ENCODE measurements at regions of chr11 and their contacts with region 1.

Region 1: DNA sequence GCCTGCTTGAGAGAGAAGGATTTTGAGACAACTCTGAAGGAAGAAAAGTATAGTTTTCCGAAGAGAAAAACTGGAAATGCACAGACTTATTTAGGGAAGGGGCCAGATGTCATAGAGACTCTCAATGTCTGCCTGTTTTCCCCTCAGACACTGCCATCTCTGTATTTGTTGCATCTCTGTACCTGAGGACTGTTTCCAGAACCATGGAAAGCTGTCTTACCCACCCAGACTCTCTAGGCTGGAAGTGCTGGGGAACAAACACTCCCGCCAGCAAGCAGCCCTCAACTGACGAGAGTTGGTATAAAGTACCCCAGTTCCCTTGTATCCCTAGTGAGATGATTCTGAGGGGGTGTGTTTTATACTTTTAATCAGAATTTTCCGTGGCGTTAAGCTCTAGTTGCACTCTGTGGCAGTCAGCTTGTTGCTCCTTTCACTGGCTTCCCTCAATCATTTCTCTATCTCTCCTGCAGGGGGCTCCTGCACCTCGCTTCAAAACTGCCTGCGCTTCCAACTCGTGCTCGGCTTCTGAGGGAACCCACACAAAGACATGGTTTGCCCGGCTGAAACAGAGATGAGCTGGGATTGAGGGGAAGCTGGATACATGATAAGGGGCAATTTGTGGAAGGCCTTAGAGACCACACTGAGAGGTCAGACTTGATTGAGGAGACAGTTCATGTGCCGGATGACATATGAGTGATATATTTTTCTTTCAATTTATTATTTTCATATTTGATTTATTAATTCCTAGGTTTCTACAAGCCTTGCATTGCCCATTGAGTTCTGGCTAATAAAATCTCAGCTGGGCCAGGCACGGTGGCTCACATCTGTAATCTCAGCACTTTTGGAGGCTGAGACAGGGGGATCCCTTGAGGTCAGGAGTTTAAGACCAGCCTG is 36.9 kb upstream of the CLPB start:
- DNase-seq: peak in 4 of 5 donors; percentile 54 to 73 (median 60)
- ATAC-seq: peak; percentile 69 to 87 (median 80)
- H3K4me3 ChIP-seq: no peak overlapping the region
- H3K27ac ChIP-seq: no peak overlapping the region
- H3K4me1 ChIP-seq: peaks cover 0 to 12% (median 0%) of the 10 kb centered on the region in 12 donors
- H3K27me3 ChIP-seq: peaks cover 0 to 26% (median 0%) of the 10 kb centered on the region in 9 donors
- CTCF ChIP-seq: peak; percentile 69 to 86 (median 77)
- POLR2A ChIP-seq: no peak

Region 2: GRCh38 chr11:72391638-72392423 is 79.4 kb before region 1 on chr11:
- intact Hi-C with region 1: no loop called
- DNase-seq: no peak
- ATAC-seq: no peak
- H3K4me3 ChIP-seq: no peak overlapping the region
- H3K27ac ChIP-seq: no peak overlapping the region
- H3K4me1 ChIP-seq: peaks cover 0 to 12% (median 4%) of the 10 kb centered on the region in 12 donors
- H3K27me3 ChIP-seq: no peaks in the 10 kb centered on the region
- CTCF ChIP-seq: no peak
- POLR2A ChIP-seq: no peak

Region 3: DNA sequence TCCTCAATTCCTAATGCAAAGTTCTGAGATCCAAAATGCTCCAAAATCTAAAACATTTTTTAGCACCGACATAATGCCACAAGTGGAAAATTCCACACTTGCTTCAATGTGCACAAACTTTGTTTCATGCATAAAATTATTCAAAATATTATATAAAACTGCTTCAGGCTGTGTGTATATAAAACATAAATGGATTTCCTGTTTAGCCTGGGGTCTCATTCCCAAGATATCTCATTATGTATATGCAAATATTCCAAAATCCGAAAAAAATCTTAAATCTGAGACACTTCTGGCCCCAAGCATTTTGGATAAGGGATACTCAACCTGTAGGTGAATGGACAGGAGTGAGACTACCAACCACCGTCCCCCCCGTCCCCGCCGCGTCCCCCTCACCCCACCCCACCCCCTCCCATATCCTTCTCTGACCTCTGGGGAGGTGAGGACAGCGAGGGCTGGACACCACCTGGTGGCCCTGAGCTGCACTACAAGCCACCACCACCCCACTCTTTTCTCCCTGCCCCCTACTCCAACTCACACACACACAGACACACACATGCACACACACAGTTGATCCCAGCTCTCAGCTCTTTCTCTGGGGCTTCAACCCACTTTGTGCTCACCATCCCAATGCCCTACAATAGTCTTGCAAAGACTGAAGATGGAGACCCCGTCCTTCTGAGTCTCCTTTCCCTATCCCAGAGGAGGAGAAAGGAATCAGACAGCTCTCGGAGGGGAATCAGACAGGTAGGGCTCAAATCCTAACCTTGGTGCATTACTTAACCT is 102.0 kb after region 1 on chr11:
- intact Hi-C with region 1: loop called in 3 of 10 experiments (anchors 1 to 5 kb)
- DNase-seq: no peak
- ATAC-seq: peak; percentile 44 to 77 (median 64)
- H3K4me3 ChIP-seq: no peak overlapping the region
- H3K27ac ChIP-seq: no peak overlapping the region
- H3K4me1 ChIP-seq: peaks cover 0 to 16% (median 0%) of the 10 kb centered on the region in 12 donors
- H3K27me3 ChIP-seq: no peaks in the 10 kb centered on the region
- CTCF ChIP-seq: peak; percentile 27 to 66 (median 54)
- POLR2A ChIP-seq: no peak

Region 4: GRCh38 chr11:72642884-72643511 is 171.7 kb after region 1 on chr11:
- intact Hi-C with region 1: loop called in 7 of 10 experiments (anchors 2 to 10 kb)
- DNase-seq: peak; percentile 41 to 84 (median 62)
- ATAC-seq: peak; percentile 33 to 82 (median 72)
- H3K4me3 ChIP-seq: peak overlapping the region; percentile 54 to 88 (median 72)
- H3K27ac ChIP-seq: peak overlapping the region in 9 of 12 donors; percentile 8 to 82 (median 43)
- H3K4me1 ChIP-seq: peaks cover 2 to 43% (median 20%) of the 10 kb centered on the region in 12 donors
- H3K27me3 ChIP-seq: peaks cover 0 to 29% (median 0%) of the 10 kb centered on the region in 9 donors
- CTCF ChIP-seq: peak; percentile 95 to 100 (median 98)
- POLR2A ChIP-seq: no peak

Region 5: GRCh38 chr11:72676861-72677341 is 205.6 kb after region 1 on chr11:
- intact Hi-C with region 1: loop called in 8 of 10 experiments (anchors 2 to 10 kb)
- DNase-seq: peak; percentile 51 to 84 (median 66)
- ATAC-seq: peak in 3 of 4 donors; percentile 64 to 72 (median 65)
- H3K4me3 ChIP-seq: no peak overlapping the region
- H3K27ac ChIP-seq: no peak overlapping the region
- H3K4me1 ChIP-seq: peaks cover 0 to 24% (median 1%) of the 10 kb centered on the region in 12 donors
- H3K27me3 ChIP-seq: peaks cover 13 to 69% (median 46%) of the 10 kb centered on the region in 9 donors
- CTCF ChIP-seq: no peak
- POLR2A ChIP-seq: no peak

Region 6: DNA sequence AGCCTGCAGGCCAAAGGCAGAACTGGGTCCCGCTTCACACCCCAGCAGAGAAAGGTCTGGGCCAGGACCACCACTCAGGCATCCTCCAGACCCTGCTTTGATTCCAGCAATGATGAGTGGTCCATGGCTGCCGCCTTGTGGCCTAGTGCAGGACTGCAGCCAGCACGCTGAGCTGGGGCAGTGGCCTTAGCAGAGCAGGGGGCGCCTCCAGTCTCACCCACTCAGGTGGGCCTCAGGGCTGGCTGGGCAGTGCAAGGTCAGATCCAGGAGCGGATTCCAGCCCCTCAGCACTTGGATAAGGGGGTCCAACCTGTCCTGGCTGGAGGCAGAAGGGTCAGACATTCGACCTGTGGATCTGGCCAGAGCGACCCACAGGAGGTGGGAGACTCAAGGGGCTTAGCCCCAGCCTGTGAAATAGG is 212.5 kb after region 1 on chr11:
- intact Hi-C with region 1: loop called in 8 of 10 experiments (anchors 2 to 10 kb)
- DNase-seq: peak; percentile 53 to 83 (median 65)
- ATAC-seq: peak; percentile 43 to 60 (median 46)
- H3K4me3 ChIP-seq: no peak overlapping the region
- H3K27ac ChIP-seq: peak overlapping the region in 6 of 12 donors; percentile 38 to 72 (median 66)
- H3K4me1 ChIP-seq: peaks cover 0 to 61% (median 31%) of the 10 kb centered on the region in 12 donors
- H3K27me3 ChIP-seq: peaks cover 0 to 4% (median 0%) of the 10 kb centered on the region in 9 donors
- CTCF ChIP-seq: peak; percentile 79 to 95 (median 89)
- POLR2A ChIP-seq: no peak

Measured in heart left ventricle (tissue), 16 donors.